ENCODE measurements at regions of chr6 and their contacts with region 1.

Region 1: DNA sequence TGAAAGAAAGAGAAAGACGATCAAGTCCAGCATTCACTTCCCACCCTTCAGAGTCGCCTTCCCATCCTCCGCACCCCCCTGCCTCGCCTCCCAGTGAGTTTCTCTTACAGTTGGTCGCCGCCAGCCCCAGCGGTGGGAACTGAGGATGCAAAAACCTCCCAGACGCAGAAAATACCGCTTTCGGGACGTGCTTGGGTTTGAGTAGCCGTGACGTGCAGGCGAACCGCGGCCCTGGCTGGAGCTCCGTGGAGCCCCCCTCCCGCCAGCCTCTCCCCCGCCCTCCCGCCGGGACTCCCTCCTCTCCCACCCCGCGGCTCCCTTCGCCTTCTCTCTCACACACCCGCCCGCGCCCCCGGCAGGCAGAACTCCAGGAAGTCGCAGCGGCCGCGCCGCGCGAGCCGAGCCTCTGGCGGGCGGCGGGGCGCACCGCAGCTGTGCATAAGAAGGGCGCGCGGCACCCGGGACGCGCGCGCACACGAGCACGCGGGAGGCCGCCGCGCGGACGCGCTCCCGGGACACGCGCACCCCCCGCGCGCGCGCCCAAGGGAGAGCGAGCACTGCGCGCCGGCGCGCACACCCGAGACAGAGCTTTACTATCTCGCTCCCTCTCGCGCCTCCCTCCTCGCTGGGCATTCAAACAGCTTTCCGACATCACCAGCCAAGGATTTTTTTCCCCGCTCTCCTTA is at the start of gene ADGRB3:
- DNase-seq: peak; percentile 52
- ATAC-seq: peak; percentile 71
- H3K4me3 Mint-ChIP-seq: peak within 1 kb of the TSS; percentile 70
- H3K27ac Mint-ChIP-seq: no peak within 1 kb of the TSS
- H3K4me1 Mint-ChIP-seq: peaks cover 20% of the 10 kb centered on the region
- H3K27me3 Mint-ChIP-seq: peaks cover 50% of the 10 kb centered on the region
- total RNA-seq, gene ADGRB3: not detected

Region 2: DNA sequence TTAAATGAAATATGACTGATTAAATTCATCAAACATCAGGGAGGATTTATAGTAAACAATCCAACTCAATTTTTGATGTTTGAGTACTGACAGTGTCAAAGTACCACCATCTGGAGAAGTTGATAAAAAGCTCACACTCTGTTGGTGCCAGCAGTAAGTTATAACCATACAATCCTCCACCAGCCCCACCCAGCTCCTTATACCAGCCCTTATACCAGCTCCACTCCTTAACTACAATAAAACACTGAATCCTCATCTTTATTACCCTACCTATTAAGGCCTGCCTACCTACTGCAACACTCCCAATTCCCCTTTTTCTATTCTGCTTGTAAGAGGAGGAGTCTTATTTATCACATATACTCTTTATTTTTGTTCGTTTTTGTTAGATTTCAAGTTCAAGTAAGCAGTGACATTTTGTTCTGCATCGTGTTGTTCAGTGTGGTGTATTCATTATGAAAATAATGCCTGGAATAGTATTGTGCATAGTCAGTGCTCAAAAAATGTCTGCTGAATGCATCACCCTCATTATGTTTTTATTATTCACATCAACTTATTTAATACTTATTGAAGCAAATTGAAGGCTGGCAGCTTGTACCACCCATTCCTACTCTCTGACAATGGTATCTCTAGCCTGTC is 954.5 kb before region 1 on chr6:
- CTCF ChIA-PET with region 1: no interaction called
- POLR2A ChIA-PET with region 1: no interaction called
- intact Hi-C with region 1: no loop called
- DNase-seq: no peak
- ATAC-seq: no peak
- H3K4me3 Mint-ChIP-seq: no peak overlapping the region
- H3K27ac Mint-ChIP-seq: no peak overlapping the region
- H3K4me1 Mint-ChIP-seq: no peaks in the 10 kb centered on the region
- H3K27me3 Mint-ChIP-seq: no peaks in the 10 kb centered on the region

Region 3: DNA sequence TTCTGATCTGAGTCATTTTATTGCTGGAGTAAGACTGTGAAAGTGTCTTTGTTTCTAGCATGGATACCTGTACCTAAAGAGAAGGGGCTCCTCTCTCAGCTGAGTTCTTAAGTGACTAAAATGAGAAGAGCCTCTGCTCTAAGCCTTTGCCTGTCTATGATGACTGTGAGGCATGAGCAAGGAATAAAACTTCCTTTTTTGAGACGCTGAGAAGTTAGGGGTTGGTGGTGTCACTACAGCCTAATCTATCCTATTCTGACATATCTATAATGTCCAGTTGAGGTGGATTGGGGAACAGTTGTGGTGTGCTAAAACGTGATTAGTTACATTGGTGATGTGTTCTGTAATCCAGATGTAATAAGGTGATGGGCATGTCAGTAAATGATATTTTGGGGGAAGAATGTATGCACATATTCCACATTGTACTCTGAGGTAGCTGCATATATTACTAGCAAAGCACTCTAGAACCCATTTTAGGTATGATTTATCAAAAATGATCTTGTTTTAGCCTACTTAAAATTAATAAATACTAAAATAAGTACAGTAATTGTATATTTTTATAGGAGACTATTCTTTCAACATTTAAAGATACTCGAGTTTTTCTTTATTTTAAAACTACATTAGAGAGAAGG is 18.3 kb after region 1 on chr6:
- CTCF ChIA-PET with region 1: no interaction called
- POLR2A ChIA-PET with region 1: no interaction called
- intact Hi-C with region 1: no loop called
- DNase-seq: no peak
- ATAC-seq: no peak
- H3K4me3 Mint-ChIP-seq: no peak overlapping the region
- H3K27ac Mint-ChIP-seq: no peak overlapping the region
- H3K4me1 Mint-ChIP-seq: no peaks in the 10 kb centered on the region
- H3K27me3 Mint-ChIP-seq: no peaks in the 10 kb centered on the region

Region 4: DNA sequence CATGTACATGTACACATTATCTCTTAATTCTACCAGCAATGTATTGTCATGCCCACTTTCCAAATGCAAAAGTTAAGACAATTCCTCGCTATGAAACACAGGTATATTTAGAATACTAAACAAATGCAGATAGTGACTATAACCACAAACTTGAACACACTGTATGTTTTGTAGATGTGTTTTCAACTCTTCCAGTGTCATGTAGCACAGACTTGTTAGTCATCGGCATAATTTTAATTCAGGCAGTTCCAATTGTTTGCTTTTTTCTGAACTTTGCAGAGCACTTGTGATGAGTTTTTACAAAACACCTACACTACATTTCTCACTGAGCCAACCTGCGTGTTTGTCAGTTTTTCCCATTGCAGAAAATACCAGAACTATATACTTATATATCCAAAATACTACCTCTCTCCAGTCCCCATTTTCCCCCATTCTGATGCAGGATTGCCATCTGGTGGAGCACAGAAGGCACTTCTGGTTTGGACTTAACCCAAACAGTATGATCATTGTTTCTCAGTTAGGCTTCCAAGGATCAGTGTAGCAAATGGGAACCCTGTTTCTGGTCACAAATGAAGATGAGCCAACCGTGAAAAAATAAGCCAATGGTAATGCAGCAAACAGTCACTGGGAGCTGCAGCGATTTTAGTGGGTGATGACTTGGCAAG is 143.6 kb after region 1 on chr6:
- CTCF ChIA-PET with region 1: no interaction called
- POLR2A ChIA-PET with region 1: no interaction called
- intact Hi-C with region 1: loop called in 1 of 2 experiments (anchors 2 kb)
- DNase-seq: peak; percentile 7
- ATAC-seq: no peak
- H3K4me3 Mint-ChIP-seq: no peak overlapping the region
- H3K27ac Mint-ChIP-seq: no peak overlapping the region
- H3K4me1 Mint-ChIP-seq: no peaks in the 10 kb centered on the region
- H3K27me3 Mint-ChIP-seq: no peaks in the 10 kb centered on the region

Region 5: DNA sequence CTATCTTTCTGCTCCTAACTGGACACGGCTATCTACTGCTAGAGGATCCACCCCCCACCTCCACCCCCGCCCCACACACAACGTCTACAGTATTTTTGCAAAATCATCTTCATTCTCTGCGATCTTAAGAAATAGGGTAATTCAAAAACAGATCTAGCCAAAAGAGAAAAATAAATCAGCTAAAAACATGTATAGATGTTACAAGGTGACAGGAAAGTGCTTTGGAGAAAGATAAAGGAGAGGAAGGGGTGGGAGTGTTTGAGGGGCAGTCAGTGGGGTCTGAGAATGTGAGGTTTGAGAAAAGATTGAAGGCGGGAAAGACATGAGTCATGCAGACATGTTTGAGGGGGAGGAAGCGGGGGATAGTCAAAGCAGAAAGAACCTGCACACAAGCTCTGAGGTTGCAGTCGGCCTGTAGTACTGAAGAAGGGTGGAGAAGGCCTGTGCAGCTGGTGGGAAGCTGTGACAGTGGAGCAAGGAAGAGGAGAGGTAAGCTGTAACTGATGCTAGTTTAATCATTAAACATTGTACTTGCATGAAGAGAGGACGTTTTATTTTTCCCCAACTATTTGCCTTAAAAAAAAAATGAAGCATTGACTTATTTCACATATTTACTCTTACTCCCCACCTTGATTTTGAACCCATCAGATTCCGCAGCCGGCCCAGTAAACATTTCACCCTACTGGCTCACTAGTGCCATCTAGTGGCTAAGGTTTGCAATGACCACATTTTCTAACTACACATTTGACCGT is 332.9 kb after region 1 on chr6:
- CTCF ChIA-PET with region 1: no interaction called
- POLR2A ChIA-PET with region 1: no interaction called
- intact Hi-C with region 1: loop called (anchors 2 to 5 kb)
- DNase-seq: peak; percentile 74
- ATAC-seq: peak; percentile 68
- H3K4me3 Mint-ChIP-seq: no peak overlapping the region
- H3K27ac Mint-ChIP-seq: no peak overlapping the region
- H3K4me1 Mint-ChIP-seq: peaks cover 11% of the 10 kb centered on the region
- H3K27me3 Mint-ChIP-seq: no peaks in the 10 kb centered on the region

Region 6: DNA sequence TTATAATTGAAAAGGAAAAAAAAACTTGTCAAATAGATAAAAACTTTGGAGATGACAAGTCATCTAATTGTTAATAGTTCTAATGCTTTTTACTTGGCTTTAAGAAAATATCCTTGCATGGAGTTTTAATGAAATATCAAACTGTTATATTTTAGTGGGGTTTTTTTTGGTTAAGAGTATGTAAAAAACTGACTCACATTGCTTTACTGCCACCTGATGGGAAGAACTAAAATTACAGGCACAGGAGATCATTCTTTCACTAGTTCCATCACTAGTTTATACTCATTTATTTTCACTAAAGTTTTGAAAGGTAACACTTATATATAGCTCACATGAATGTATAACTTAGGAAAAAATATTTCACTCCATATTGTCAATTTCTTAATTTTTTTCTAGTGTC is 852.8 kb after region 1 on chr6:
- CTCF ChIA-PET with region 1: no interaction called
- POLR2A ChIA-PET with region 1: no interaction called
- intact Hi-C with region 1: loop called in 1 of 2 experiments (anchors 2 kb)
- DNase-seq: no peak
- ATAC-seq: no peak
- H3K4me3 Mint-ChIP-seq: no peak overlapping the region
- H3K27ac Mint-ChIP-seq: no peak overlapping the region
- H3K4me1 Mint-ChIP-seq: no peaks in the 10 kb centered on the region
- H3K27me3 Mint-ChIP-seq: no peaks in the 10 kb centered on the region

Region 7: GRCh38 chr6:69732640-69733039 is 1097.8 kb after region 1 on chr6:
- CTCF ChIA-PET with region 1: interaction called, 3 read pairs
- POLR2A ChIA-PET with region 1: no interaction called
- intact Hi-C with region 1: loop called (anchors 1 to 5 kb)
- DNase-seq: no peak
- ATAC-seq: no peak
- H3K4me3 Mint-ChIP-seq: no peak overlapping the region
- H3K27ac Mint-ChIP-seq: no peak overlapping the region
- H3K4me1 Mint-ChIP-seq: no peaks in the 10 kb centered on the region
- H3K27me3 Mint-ChIP-seq: no peaks in the 10 kb centered on the region